Mucosa of descending colon (tissue), 3 donors: ENCODE measurements at regions of chr6 and their contacts with region 1.

Region 1: GRCh38 chr6:51959744-51960383 is 127.5 kb downstream of the PKHD1 start:
- DNase-seq: peak; percentile 46 to 88 (median 80)
- ATAC-seq: peak; percentile 64
- H3K4me3 ChIP-seq: no peak overlapping the region
- H3K4me1 ChIP-seq: no peaks in the 10 kb centered on the region
- CTCF ChIP-seq: peak; percentile 29

Region 2: GRCh38 chr6:51855310-51856082 is 104.4 kb before region 1 on chr6:
- intact Hi-C with region 1: loop called in 1 of 2 experiments (anchors 10 kb)
- DNase-seq: peak in 1 of 3 donors; percentile 73
- ATAC-seq: peak; percentile 64
- H3K4me3 ChIP-seq: no peak overlapping the region
- H3K4me1 ChIP-seq: no peaks in the 10 kb centered on the region
- CTCF ChIP-seq: no peak